ENCODE measurements at regions of chr11 and their contacts with region 1.

Region 1: GRCh38 chr11:113305440-113306336 is 8.7 kb upstream of the TTC12 start:
- DNase-seq: peak; percentile 81 to 89 (median 82)
- ATAC-seq: peak; percentile 65
- H3K4me3 ChIP-seq: no peak overlapping the region
- H3K27ac ChIP-seq: no peak overlapping the region
- H3K4me1 ChIP-seq: no peaks in the 10 kb centered on the region
- H3K27me3 ChIP-seq: no peaks in the 10 kb centered on the region
- CTCF ChIP-seq: peak; percentile 86 to 96 (median 94)
- POLR2A ChIP-seq: no peak

Region 2: GRCh38 chr11:113532697-113533424 is 227.2 kb after region 1 on chr11:
- intact Hi-C with region 1: loop called (anchors 5 kb)
- DNase-seq: peak; percentile 77 to 85 (median 80)
- ATAC-seq: peak; percentile 63
- H3K4me3 ChIP-seq: no peak overlapping the region
- H3K27ac ChIP-seq: no peak overlapping the region
- H3K4me1 ChIP-seq: no peaks in the 10 kb centered on the region
- H3K27me3 ChIP-seq: peaks cover 0 to 10% of the 10 kb centered on the region in 2 donors
- CTCF ChIP-seq: peak; percentile 71 to 89 (median 74)
- POLR2A ChIP-seq: no peak

Region 3: DNA sequence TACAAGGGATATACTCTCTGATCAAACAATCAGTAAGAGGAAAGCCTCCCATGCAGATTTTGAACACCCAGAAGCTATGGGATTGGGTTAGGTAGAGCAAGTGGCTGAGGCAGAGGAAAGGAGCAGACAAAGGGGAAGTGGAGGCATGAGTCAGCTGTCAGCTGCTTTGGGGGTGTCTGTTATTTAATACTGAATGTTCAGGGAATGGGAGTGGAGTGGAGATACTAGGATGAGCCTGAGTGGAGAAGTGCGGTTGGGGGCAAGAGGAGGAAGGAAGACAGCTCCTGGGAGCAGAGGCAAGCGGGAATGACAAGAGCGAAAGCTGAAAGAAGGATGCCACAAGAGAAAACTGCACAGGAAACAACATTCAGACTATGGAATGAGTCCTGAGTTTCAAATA is 423.1 kb after region 1 on chr11:
- intact Hi-C with region 1: loop called (anchors 10 kb)
- DNase-seq: no peak
- ATAC-seq: no peak
- H3K4me3 ChIP-seq: no peak overlapping the region
- H3K27ac ChIP-seq: no peak overlapping the region
- H3K4me1 ChIP-seq: no peaks in the 10 kb centered on the region
- H3K27me3 ChIP-seq: no peaks in the 10 kb centered on the region
- CTCF ChIP-seq: no peak
- POLR2A ChIP-seq: no peak

Region 4: DNA sequence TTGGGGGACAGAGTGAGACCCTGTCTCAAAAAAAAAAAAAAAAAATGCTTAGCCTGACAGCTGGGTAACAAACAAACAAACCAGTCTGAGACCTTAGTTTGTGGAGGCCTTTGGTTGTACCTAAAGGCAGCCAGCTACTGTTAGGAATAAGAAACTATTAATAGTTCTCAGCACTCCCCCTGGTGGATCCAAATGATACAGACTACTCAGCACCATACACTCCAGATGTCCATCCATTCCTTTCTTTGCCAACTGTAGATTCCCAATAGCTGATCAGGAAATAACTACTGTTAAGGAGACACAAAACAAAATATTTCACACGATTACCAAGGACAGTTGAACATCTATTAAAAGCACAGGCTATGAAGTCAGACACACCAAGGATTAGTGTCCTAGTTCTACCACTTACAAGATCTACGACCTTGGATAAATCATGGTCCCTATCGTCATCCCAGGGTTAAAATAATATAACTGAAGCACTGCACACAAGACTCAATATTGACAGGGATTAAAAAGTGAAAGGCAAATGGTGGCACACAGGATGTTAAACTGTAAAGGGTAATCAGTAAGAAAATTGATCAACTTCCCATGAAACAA is 491.1 kb after region 1 on chr11:
- intact Hi-C with region 1: loop called (anchors 5 kb)
- DNase-seq: peak; percentile 35 to 63 (median 58)
- ATAC-seq: peak; percentile 90
- H3K4me3 ChIP-seq: no peak overlapping the region
- H3K27ac ChIP-seq: no peak overlapping the region
- H3K4me1 ChIP-seq: no peaks in the 10 kb centered on the region
- H3K27me3 ChIP-seq: no peaks in the 10 kb centered on the region
- CTCF ChIP-seq: peak; percentile 37 to 70 (median 64)
- POLR2A ChIP-seq: no peak

Measured in body of pancreas (tissue), 4 donors.